Panc1 (cell line): ENCODE measurements at regions of chr6 and their contacts with region 1.

Region 1: DNA sequence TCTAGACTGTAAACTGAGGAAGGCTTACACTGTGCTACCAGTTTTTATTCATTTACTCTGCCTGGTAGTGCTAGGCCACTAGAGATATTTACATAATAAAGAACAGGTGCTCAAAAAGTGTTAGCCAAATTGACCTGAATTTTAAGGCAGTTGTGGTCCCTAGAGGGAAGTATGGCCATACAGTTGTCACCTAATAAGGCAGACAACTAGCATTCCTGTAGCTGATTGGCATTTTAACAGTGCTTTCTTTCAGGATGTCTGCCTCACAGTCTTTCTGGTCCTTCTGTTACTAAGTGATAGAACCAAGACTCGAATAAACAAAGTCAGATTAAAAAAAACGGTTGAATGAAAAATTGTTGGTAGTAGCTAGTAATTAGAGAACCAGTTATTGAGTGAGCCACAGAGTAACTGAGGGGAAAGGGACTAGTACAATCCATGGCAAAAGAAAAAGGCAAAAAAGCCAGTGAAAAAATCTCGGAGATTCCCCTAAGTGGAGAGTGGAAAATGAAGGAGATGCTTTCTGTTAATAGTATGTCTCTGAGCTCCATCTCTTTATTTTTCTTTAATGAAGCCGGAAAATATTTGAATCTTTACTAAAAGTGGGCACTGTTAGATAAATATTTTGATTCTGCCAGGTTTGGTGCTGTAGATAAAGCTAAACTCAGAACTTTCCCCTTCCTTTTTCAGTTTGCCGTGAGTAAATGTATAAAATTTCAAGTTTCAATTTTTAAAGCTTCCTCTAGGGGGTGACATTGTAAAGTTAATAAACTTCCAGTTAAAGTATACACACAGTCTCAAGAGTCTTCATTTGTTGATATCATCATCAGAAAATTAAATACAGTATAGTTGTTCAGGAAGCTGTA is 9.1 kb downstream of the VTA1 start:
- DNase-seq: no peak
- ATAC-seq: peak; percentile 86
- H3K4me3 ChIP-seq: peak overlapping the region; percentile 15; a peak in 2 of 4 replicates
- H3K27ac ChIP-seq: peak overlapping the region; percentile 93
- H3K4me1 ChIP-seq: peaks cover 42% of the 10 kb centered on the region
- H3K27me3 ChIP-seq: no peaks in the 10 kb centered on the region
- CTCF ChIP-seq: peak; percentile 60; the same call in 1 of the 2 replicates

Region 2: DNA sequence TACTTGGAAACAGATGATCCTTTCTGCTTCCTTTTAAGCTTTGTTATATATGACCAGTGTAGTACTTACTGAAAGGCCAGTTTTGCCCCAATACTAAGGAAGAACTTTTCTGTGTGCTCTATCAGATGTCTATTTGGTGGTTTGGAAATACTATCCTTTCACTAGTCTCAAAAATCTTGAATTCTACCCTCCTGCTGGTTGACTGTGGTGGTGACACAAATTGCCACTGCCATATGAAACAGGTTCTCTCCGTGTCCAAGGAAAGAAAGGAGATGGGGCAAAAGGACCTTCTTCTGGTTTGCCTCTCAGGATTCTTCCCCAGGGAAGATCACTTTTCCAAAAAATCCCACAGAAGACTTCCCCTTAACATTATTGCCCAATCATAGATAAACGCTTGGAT is 17.2 kb before region 1 on chr6:
- CTCF ChIA-PET with region 1: no interaction called
- POLR2A ChIA-PET with region 1: no interaction called
- in situ Hi-C with region 1: no loop called
- intact Hi-C with region 1: no loop called
- DNase-seq: no peak
- ATAC-seq: no peak
- H3K4me3 ChIP-seq: no peak overlapping the region
- H3K27ac ChIP-seq: no peak overlapping the region
- H3K4me1 ChIP-seq: no peaks in the 10 kb centered on the region
- H3K27me3 ChIP-seq: peaks cover 2% of the 10 kb centered on the region; the same call in 1 of the 2 replicates
- CTCF ChIP-seq: no peak

Region 3: GRCh38 chr6:142301651-142302370 is 145.7 kb after region 1 on chr6 and contains the start of gene ADGRG6:
- CTCF ChIA-PET with region 1: interaction called, 4 read pairs
- POLR2A ChIA-PET with region 1: no interaction called
- in situ Hi-C with region 1: no loop called
- intact Hi-C with region 1: loop called (anchors 10 kb)
- DNase-seq: no peak
- ATAC-seq: peak; percentile 89
- H3K4me3 ChIP-seq: peak within 1 kb of the TSS; percentile 78 to 85
- H3K27ac ChIP-seq: peak within 1 kb of the TSS; percentile 100
- H3K4me1 ChIP-seq: peaks cover 36% of the 10 kb centered on the region
- H3K27me3 ChIP-seq: no peaks in the 10 kb centered on the region
- CTCF ChIP-seq: peak; percentile 75
- total RNA-seq, gene ADGRG6: 259 TPM

Region 4: GRCh38 chr6:142387997-142388815 is 232.1 kb after region 1 on chr6:
- CTCF ChIA-PET with region 1: no interaction called
- POLR2A ChIA-PET with region 1: no interaction called
- in situ Hi-C with region 1: no loop called
- intact Hi-C with region 1: loop called (anchors 2 kb)
- DNase-seq: no peak
- ATAC-seq: peak; percentile 85
- H3K4me3 ChIP-seq: no peak overlapping the region
- H3K27ac ChIP-seq: peak overlapping the region; percentile 100
- H3K4me1 ChIP-seq: peaks cover 62% of the 10 kb centered on the region
- H3K27me3 ChIP-seq: no peaks in the 10 kb centered on the region
- CTCF ChIP-seq: peak; percentile 74; the same call in 1 of the 2 replicates